ENCODE measurements at regions of chr12 and their contacts with region 1.

Region 1: DNA sequence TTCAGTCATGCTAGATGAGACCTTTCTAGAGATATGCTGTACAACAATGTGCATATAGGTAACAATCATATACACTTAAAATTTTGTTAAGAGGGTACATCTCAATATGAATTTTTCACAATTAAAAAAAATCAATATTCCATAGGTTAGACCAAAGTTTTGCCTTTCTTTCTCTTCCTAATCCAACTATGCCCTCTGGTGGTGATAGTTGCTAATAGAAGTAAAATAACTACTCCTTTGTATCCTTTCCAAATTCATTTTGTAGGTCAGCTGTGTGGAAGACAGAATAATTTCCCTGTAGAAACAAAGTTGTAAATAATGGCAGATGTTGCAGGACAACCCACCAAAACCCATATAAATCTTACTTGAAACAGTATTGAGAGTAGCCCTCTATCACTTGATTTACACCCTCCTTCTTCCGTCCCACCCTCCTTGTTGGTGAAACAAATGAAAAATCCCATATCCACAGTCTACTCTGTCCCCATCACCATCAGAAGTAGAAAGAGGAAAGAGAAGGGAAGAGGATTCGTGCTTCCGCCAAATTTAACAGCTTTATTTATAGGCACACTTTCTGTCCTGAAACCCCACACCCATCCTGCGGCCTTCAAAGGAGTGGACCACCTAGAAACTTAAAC is 34.2 kb upstream of the KICS2 start:
- ATAC-seq: peak in 4 of 8 experiments; percentile 21 to 43 (median 24)
- H3K4me3 ChIP-seq: no peak overlapping the region
- H3K27ac ChIP-seq: no peak overlapping the region
- H3K4me1 ChIP-seq: no peaks in the 10 kb centered on the region

Region 2: DNA sequence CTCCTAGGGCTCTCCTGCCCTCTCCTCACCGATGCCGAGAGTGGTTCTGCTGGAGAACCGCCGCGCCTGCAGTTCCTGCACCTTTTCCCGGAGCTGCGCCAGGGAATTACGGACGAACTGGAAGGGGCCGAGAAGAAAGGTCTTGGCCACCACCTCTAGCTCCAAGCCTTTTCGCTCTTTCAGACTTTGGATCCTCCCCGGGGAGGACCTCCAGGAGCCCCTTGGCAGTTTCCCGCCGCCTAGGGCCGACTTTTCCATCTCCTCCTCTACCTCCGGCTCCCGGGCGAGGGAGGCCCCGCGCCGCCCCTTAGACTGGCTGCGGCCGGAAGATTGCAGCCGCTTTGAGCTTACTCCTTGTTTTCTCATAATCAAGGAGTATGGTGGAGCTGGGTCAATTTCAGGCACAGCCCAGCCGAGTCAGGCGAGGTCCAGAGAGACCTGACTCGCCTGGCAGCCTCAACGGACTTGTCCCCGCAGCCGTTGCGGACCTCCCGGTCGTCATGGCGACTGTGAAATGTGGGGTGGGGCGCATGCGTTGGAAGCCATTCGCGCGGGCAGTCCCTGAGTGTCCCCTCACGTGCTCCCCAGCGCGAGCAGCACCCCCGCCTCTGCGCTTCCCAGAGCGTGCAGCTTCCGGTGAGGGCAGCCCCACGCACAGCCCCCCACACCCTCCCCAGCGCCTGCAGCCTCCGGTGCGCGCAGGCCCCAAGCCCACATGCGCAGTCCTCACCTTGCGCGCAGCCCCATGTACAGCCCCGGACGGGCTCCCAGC is 588.1 kb before region 1 on chr12 and contains the start of gene DPY19L2:
- in situ Hi-C with region 1: no loop called
- ATAC-seq: peak; percentile 78 to 97 (median 92)
- H3K4me3 ChIP-seq: peak within 1 kb of the TSS; percentile 53 to 94 (median 80)
- H3K27ac ChIP-seq: peak within 1 kb of the TSS; percentile 14 to 72
- H3K4me1 ChIP-seq: peaks cover 6 to 8% of the 10 kb centered on the region in 2 donors
- total RNA-seq, gene DPY19L2: 1.7 to 22.8 (median 14.7) TPM

Region 3: GRCh38 chr12:63836936-63837335 is 419.3 kb before region 1 on chr12:
- in situ Hi-C with region 1: loop called in 8 of 9 experiments (anchors 10 to 25 kb)
- ATAC-seq: no peak
- H3K4me3 ChIP-seq: no peak overlapping the region
- H3K27ac ChIP-seq: no peak overlapping the region
- H3K4me1 ChIP-seq: no peaks in the 10 kb centered on the region

Region 4: GRCh38 chr12:64451687-64452558 is 195.6 kb after region 1 on chr12 and contains the start of gene TBK1:
- in situ Hi-C with region 1: no loop called
- ATAC-seq: peak; percentile 84 to 98 (median 92)
- H3K4me3 ChIP-seq: peak within 1 kb of the TSS; percentile 51 to 77 (median 59)
- H3K27ac ChIP-seq: peak within 1 kb of the TSS; percentile 70 to 84
- H3K4me1 ChIP-seq: peaks cover 3 to 19% of the 10 kb centered on the region in 2 donors
- total RNA-seq, gene TBK1: 11.7 to 36.4 (median 17.4) TPM